Gastrocnemius medialis (tissue), 4 donors: ENCODE measurements at regions of chr3 and their contacts with region 1.

Region 1: DNA sequence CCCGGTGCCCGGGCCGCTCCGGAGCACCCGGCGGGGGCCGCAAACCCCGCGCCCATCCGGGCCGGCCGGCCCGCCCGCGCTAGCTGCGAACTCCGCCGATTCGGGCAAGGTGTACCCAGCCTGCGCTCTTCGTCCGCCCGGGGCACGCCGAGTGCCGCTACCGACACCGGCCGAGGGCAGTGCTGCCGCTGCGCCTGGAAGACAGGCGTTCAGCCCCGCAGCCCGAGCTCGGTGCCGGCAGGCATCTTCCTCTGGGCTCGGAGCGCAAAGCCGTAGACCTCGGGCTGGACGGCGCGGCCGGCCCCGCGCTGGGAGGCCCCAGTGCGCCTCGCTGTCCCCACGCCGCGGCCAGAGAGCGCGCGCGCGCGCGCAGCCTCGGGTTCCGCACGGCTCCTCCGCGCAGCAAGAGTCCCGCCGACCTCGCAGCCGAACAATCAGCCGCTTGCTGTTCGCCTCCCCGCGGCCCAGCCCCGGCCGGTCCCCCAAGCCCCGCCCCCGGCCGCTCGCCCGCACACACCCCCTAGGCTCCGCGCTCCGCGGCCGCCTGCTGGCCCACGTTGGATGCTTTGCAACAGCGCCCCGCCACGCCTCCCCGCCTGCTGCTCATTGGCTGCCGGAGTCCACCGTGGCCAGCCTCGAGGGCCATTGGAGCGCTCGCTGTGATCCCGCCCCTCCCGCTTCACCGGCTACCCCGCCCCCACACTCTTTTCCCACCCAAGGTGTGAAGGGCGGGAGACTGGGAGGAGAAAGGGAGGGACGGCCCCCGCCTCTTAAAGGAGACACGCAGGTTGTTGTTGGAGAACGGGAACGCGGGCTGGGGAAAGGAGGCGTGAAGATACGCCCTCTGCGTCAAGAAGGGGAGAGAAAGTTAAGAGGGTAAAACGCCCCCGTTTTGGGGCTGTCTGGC is at the start of gene LRIG1:
- DNase-seq: peak; percentile 99
- ATAC-seq: peak; percentile 68 to 73
- H3K4me3 ChIP-seq: peak within 1 kb of the TSS; percentile 66 to 84 (median 74)
- H3K27ac ChIP-seq: peak within 1 kb of the TSS; percentile 88 to 98 (median 94)
- H3K4me1 ChIP-seq: peaks cover 35 to 37% of the 10 kb centered on the region in 2 donors
- H3K27me3 ChIP-seq: no peaks in the 10 kb centered on the region
- CTCF ChIP-seq: peak in 3 of 5 experiments; percentile 26 to 43 (median 33)
- POLR2A ChIP-seq: peak; percentile 90 to 93
- total RNA-seq, gene LRIG1: 45.3 to 103 (median 58.6) TPM

Region 2: DNA sequence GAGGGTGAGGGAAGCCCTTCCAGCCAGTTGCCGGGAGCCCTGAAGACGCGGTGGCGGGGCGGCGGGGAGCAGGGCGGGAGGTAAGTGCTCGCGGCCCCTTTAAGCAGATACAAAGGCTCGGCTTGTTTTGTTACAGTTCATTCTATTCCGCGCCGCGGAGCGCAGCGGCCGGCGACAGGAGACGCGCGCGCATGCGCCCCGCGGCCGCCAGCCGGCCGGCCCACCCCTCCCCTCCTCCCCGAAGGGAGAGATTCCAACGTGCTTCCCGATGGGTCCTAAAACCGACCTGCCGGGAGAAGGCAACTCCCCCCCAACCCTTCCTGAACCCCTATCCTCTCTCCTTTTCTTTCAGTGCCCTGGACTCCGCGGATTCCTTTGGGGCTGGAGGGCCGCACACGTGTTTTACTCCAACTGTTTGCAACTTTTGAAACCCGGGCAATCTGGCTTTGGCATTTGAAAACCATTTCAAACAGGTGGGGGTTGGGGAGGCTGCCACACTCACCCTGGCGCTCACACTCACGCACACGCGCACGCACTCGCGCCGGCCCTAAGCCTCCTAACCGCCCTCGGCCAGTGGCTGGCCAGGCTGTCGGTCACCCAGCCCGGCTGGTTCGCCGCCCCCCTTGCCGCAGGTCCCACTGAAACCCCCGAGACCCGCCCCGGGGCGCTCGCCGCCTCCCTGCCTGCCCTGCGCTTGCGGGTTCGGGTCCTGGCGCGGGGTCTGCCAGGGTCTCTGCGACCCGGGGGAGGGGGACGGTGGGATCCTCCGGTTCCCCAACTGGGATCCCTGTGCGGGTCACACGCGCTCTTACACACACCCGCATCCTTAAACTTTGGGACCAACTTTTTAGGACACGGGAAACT is 461.9 kb before region 1 on chr3 and contains the start of gene MAGI1:
- in situ Hi-C with region 1: loop called in 1 of 4 experiments (anchors 25 kb)
- intact Hi-C with region 1: loop called (anchors 10 kb)
- DNase-seq: peak; percentile 78 to 89
- ATAC-seq: peak; percentile 87 to 92
- H3K4me3 ChIP-seq: peak within 1 kb of the TSS; percentile 91 to 99 (median 96)
- H3K27ac ChIP-seq: peak within 1 kb of the TSS; percentile 93 to 97 (median 95)
- H3K4me1 ChIP-seq: peaks cover 18 to 21% of the 10 kb centered on the region in 2 donors
- H3K27me3 ChIP-seq: no peaks in the 10 kb centered on the region
- CTCF ChIP-seq: no peak
- POLR2A ChIP-seq: peak; percentile 64 to 83
- total RNA-seq, gene MAGI1: 2.6 to 7.5 (median 3.9) TPM

Region 3: GRCh38 chr3:66407611-66408218 is 93.1 kb before region 1 on chr3:
- in situ Hi-C with region 1: loop called in 1 of 4 experiments (anchors 5 kb)
- intact Hi-C with region 1: loop called (anchors 2 kb)
- DNase-seq: peak; percentile 57 to 84
- ATAC-seq: peak; percentile 32 to 61
- H3K4me3 ChIP-seq: no peak overlapping the region
- H3K27ac ChIP-seq: peak overlapping the region; percentile 77 to 92 (median 80)
- H3K4me1 ChIP-seq: peaks cover 60 to 68% of the 10 kb centered on the region in 2 donors
- H3K27me3 ChIP-seq: no peaks in the 10 kb centered on the region
- CTCF ChIP-seq: peak; percentile 91 to 98 (median 96)
- POLR2A ChIP-seq: no peak

Region 4: GRCh38 chr3:66428733-66429132 is 72.1 kb before region 1 on chr3:
- in situ Hi-C with region 1: loop called in 2 of 4 experiments (anchors 5 to 10 kb)
- intact Hi-C with region 1: no loop called
- DNase-seq: peak; percentile 91 to 93
- ATAC-seq: peak; percentile 64 to 85
- H3K4me3 ChIP-seq: peak overlapping the region; percentile 10 to 38 (median 14)
- H3K27ac ChIP-seq: peak overlapping the region; percentile 77 to 90 (median 82)
- H3K4me1 ChIP-seq: peaks cover 85 to 91% of the 10 kb centered on the region in 2 donors
- H3K27me3 ChIP-seq: no peaks in the 10 kb centered on the region
- CTCF ChIP-seq: no peak
- POLR2A ChIP-seq: peak; percentile 20 to 60

Region 5: DNA sequence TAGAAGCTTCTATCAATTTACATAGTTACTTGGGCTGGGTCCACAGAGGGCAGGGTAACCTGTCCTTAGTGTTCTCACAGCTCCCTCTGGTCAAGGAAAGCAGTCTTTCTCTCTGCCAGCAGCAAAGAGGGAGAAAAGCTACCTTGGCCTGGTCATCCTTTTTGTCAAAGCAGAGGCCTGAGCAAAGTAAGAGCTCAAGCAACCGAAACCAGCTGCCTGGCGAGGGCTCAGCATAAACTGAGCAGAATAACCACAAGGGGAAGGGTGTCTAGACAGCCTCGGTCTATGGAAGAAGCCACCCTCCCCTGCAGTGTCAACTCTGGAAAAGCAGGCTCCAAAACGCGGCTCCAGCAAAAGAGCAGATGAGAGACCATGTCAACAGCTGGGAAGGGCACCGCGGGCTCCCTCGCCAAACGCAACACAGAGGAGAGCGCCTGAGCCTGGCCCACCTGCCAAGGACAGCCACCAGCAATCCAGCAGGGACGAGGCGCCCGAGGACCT is 17.4 kb before region 1 on chr3:
- in situ Hi-C with region 1: no loop called
- intact Hi-C with region 1: loop called (anchors 2 kb)
- DNase-seq: peak; percentile 78 to 83
- ATAC-seq: peak; percentile 50 to 64
- H3K4me3 ChIP-seq: peak overlapping the region; percentile 26 to 38 (median 30)
- H3K27ac ChIP-seq: peak overlapping the region; percentile 92 to 96 (median 94)
- H3K4me1 ChIP-seq: peaks cover 90 to 93% of the 10 kb centered on the region in 2 donors
- H3K27me3 ChIP-seq: no peaks in the 10 kb centered on the region
- CTCF ChIP-seq: no peak
- POLR2A ChIP-seq: no peak

Region 6: DNA sequence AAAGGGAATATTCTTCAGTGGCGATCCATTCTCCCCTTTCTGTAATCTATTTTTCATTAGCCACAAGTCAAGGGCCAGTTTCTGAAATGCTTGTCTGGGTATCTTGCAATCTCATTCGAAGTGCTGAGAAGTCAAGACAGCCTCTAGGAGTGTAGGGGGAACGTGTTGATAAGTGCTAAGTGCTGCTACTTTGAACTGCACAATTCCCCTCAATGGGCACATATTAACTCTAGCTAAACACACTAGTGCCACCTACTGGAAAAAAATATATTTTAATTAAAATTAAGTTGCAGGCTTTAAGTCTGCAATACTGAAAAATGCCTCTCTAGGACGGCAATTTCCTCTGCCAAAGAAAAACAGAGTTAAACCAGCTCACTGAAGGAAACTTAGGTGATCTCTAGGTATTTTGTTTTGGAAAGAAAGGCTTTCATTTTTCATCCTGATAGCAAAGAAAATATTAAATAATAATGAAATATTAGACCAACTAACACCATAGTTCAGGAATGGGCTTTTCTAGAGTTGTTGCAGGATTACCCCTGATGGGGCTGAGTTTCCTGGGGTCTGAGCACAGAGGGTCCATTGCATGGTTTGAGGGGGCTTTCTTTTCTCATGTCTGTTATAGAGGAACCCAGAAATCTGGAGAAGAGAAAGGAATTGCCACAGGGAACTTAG is 315.4 kb after region 1 on chr3:
- in situ Hi-C with region 1: loop called (anchors 10 to 25 kb)
- intact Hi-C with region 1: loop called (anchors 5 kb)
- DNase-seq: no peak
- ATAC-seq: peak; percentile 89 to 95
- H3K4me3 ChIP-seq: no peak overlapping the region
- H3K27ac ChIP-seq: no peak overlapping the region
- H3K4me1 ChIP-seq: peaks cover 0 to 6% of the 10 kb centered on the region in 2 donors
- H3K27me3 ChIP-seq: no peaks in the 10 kb centered on the region
- CTCF ChIP-seq: peak; percentile 61 to 77 (median 65)
- POLR2A ChIP-seq: no peak

Region 7: GRCh38 chr3:66998113-66998903 is 497.5 kb after region 1 on chr3 and contains the start of gene KBTBD8:
- in situ Hi-C with region 1: no loop called
- intact Hi-C with region 1: loop called (anchors 1 kb)
- DNase-seq: peak; percentile 97 to 98
- ATAC-seq: peak; percentile 96 to 98
- H3K4me3 ChIP-seq: peak within 1 kb of the TSS; percentile 78 to 84 (median 82)
- H3K27ac ChIP-seq: peak within 1 kb of the TSS; percentile 67 to 73 (median 68)
- H3K4me1 ChIP-seq: peaks cover 14 to 19% of the 10 kb centered on the region in 2 donors
- H3K27me3 ChIP-seq: peaks cover 0 to 4% (median 0%) of the 10 kb centered on the region in 3 donors
- CTCF ChIP-seq: no peak
- POLR2A ChIP-seq: peak; percentile 48 to 74
- total RNA-seq, gene KBTBD8: 1.1 to 8.0 (median 1.6) TPM